ENCODE measurements at regions of chr6 and their contacts with region 1.

Region 1: GRCh38 chr6:722077-722524 is 29.2 kb upstream of the EXOC2 start:
- DNase-seq: peak in 1 of 2 experiments; percentile 75
- H3K4me3 ChIP-seq: no peak overlapping the region
- H3K27ac ChIP-seq: no peak overlapping the region
- H3K4me1 ChIP-seq: no peaks in the 10 kb centered on the region
- H3K27me3 ChIP-seq: no peaks in the 10 kb centered on the region
- CTCF ChIP-seq: peak; percentile 75 to 85 (median 82)
- EP300 ChIP-seq: no peak
- POLR2A ChIP-seq: no peak
- RAD21 ChIP-seq: peak; percentile 68 to 73

Region 2: DNA sequence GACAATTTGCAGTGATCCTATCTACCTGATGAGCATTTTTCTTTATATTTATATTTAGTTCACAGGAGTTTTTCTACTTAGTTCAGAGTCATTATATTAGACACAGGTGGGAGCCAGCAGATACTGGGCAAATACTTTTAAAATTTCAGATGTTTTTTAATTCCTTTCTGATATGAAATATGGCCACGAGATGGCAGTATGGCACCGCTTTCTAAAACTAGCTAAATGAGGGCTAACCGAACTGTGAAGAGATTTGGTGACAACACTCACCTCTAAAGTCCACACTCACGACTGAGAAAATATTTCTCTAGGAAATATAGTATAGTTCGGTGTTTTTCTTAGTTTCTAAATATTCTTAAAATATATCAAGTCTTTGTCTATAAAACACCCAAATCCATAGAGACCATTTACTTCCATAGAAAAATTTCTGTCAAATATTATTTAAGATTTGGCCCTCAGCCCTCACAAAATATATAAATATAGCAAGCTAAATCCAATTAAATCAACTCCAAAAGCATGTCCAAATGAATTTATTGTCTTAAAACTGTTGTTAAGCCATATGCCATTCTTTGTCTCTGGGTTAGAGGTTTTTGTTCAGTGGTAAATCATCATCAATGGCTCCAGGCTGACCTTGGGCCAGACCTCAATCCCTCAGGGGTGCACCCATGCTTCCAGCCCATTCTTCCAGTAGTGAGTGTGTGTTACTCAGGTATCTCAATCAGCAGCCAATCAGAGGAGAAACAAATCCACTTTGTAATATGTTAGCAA is 128.8 kb before region 1 on chr6:
- CTCF ChIA-PET with region 1: interaction called, 37 read pairs
- POLR2A ChIA-PET with region 1: no interaction called
- DNase-seq: no peak
- H3K4me3 ChIP-seq: no peak overlapping the region
- H3K27ac ChIP-seq: 0 out of 2 replicates have a peak overlapping the region, but pooled peaks have one; percentile 25
- H3K4me1 ChIP-seq: peaks cover 0 to 6% (median 3%) of the 10 kb centered on the region in 4 experiments; a peak in 6 of 7 replicates
- H3K27me3 ChIP-seq: no peaks in the 10 kb centered on the region
- CTCF ChIP-seq: peak in 2 of 3 experiments; percentile 39 to 55; a peak in 3 of 4 replicates
- EP300 ChIP-seq: no peak
- POLR2A ChIP-seq: no peak
- RAD21 ChIP-seq: peak; percentile 76 to 78

Region 3: DNA sequence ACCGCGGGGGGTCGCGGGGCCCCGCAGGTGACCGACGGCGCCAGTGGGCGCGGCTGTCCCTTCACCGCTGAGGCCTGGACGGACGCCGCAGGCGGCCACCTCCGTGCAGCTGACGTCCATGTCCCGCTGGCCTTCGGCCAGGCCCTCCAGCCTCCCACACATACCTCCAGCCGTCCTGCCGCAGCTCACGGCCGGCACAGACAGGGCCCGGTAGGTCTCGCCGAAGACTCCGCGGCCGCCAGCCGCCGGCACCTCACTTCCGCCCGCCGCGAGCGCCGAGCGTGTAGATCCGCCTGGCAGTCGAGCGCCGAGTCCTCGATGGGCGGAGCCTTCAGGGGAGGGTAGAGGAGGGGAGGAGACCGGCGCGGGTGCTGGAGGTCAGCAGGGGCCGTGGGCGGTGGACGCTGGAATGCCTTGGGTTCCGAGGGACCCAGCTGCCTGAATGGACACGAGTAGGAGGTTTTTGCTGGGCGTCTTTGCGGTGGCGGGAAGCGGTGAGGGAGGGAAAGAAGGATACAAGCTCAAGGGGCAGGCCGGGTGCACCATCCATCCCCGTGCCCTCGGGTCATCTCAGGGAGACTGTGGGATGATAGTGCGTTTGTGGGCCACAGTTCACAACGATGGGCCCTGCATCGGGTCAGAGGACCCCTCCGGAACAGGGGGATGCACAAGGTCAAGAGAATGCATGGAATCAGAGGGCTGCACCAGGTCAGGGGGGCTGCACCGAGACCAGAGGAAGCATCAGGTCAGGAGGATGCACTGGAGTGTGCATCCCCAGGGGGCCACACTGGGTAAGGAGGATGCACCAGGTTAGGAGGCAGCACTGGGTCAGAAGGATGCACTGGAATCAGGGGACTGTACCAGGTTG is 29.0 kb before region 1 on chr6 and contains the start of gene EXOC2:
- CTCF ChIA-PET with region 1: interaction called, 11 read pairs
- POLR2A ChIA-PET with region 1: no interaction called
- DNase-seq: peak; percentile 54 to 92
- H3K4me3 ChIP-seq: peak within 1 kb of the TSS; percentile 71 to 93 (median 88)
- H3K27ac ChIP-seq: peak within 1 kb of the TSS; percentile 56; the same call in 1 of the 2 replicates
- H3K4me1 ChIP-seq: peaks cover 0 to 4% (median 1%) of the 10 kb centered on the region in 4 experiments; a peak in 4 of 7 replicates
- H3K27me3 ChIP-seq: no peaks in the 10 kb centered on the region
- CTCF ChIP-seq: peak; percentile 84 to 99 (median 85)
- EP300 ChIP-seq: peak in 1 of 2 experiments; percentile 91; a peak in 1 of 3 replicates
- POLR2A ChIP-seq: peak in 1 of 2 experiments; percentile 40; a peak in 1 of 3 replicates
- RAD21 ChIP-seq: peak; percentile 49 to 63
- total RNA-seq, gene EXOC2: 44.2 and 44.4 TPM in 2 replicates

Region 4: GRCh38 chr6:701700-702479 is 20.2 kb before region 1 on chr6:
- CTCF ChIA-PET with region 1: interaction called, 20 read pairs
- POLR2A ChIA-PET with region 1: interaction called, 5 read pairs
- DNase-seq: no peak
- H3K4me3 ChIP-seq: peak overlapping the region in 1 of 4 experiments; percentile 11; a peak in 1 of 8 replicates
- H3K27ac ChIP-seq: no peak overlapping the region
- H3K4me1 ChIP-seq: peaks cover 4 to 17% (median 13%) of the 10 kb centered on the region in 4 experiments
- H3K27me3 ChIP-seq: no peaks in the 10 kb centered on the region
- CTCF ChIP-seq: peak; percentile 34 to 51 (median 49)
- EP300 ChIP-seq: no peak
- POLR2A ChIP-seq: no peak
- RAD21 ChIP-seq: 0 out of 4 replicates have a peak, but pooled peaks of 1 of the 2 experiments have one; percentile 31

Region 5: GRCh38 chr6:710601-711571 is 11.2 kb before region 1 on chr6:
- CTCF ChIA-PET with region 1: interaction called, 11 read pairs
- POLR2A ChIA-PET with region 1: interaction called, 5 read pairs
- DNase-seq: peak in 1 of 2 experiments; percentile 75
- H3K4me3 ChIP-seq: peak overlapping the region; percentile 38 to 63 (median 48)
- H3K27ac ChIP-seq: no peak overlapping the region
- H3K4me1 ChIP-seq: peaks cover 4 to 17% (median 7%) of the 10 kb centered on the region in 4 experiments; a peak in 6 of 7 replicates
- H3K27me3 ChIP-seq: peaks cover 0 to 2% (median 0%) of the 10 kb centered on the region in 4 experiments; a peak in 3 of 7 replicates
- CTCF ChIP-seq: no peak
- EP300 ChIP-seq: no peak
- POLR2A ChIP-seq: peak in 1 of 2 experiments; percentile 41; a peak in 2 of 3 replicates
- RAD21 ChIP-seq: no peak

Region 6: DNA sequence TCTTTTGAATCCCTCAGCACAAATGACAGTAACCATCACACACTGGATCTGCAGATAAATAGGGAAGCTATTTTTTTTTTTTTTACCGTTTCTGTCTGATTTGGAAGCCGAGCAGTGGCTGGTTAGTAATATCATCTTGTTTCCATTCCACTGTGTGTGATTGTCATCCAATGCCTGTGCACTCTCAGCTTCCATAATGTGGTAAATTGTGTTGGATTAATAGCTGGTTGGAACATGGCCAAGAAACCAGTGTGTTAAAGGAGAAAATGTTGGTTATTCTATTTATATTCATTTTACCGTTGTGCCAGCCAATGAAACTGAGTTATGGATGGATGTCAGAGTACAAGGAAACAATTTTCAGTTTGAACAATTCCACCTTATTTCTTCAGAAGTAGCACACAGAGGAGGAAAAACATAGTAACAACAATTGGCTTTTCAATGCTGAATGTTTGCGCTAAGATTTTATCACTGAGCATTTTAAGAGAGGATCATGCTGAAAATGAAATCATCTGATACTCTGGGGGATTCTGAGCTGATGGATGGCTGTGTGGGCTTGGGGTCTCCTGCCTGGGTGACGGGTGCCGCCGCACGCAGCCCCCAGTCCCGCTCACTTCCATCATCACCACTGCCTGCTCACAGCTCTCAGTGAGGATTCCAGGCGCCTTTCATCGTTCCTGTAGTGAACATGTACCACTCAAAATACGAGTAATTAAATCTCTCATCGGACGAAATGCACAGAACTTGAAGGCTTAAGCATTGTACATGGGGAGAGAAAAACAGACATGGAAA is 11.5 kb after region 1 on chr6:
- CTCF ChIA-PET with region 1: interaction called, 48 read pairs
- POLR2A ChIA-PET with region 1: no interaction called
- DNase-seq: no peak
- H3K4me3 ChIP-seq: no peak overlapping the region
- H3K27ac ChIP-seq: no peak overlapping the region
- H3K4me1 ChIP-seq: peaks cover 0 to 5% (median 1%) of the 10 kb centered on the region in 4 experiments; a peak in 4 of 7 replicates
- H3K27me3 ChIP-seq: no peaks in the 10 kb centered on the region
- CTCF ChIP-seq: no peak
- EP300 ChIP-seq: no peak
- POLR2A ChIP-seq: no peak
- RAD21 ChIP-seq: no peak

Region 7: DNA sequence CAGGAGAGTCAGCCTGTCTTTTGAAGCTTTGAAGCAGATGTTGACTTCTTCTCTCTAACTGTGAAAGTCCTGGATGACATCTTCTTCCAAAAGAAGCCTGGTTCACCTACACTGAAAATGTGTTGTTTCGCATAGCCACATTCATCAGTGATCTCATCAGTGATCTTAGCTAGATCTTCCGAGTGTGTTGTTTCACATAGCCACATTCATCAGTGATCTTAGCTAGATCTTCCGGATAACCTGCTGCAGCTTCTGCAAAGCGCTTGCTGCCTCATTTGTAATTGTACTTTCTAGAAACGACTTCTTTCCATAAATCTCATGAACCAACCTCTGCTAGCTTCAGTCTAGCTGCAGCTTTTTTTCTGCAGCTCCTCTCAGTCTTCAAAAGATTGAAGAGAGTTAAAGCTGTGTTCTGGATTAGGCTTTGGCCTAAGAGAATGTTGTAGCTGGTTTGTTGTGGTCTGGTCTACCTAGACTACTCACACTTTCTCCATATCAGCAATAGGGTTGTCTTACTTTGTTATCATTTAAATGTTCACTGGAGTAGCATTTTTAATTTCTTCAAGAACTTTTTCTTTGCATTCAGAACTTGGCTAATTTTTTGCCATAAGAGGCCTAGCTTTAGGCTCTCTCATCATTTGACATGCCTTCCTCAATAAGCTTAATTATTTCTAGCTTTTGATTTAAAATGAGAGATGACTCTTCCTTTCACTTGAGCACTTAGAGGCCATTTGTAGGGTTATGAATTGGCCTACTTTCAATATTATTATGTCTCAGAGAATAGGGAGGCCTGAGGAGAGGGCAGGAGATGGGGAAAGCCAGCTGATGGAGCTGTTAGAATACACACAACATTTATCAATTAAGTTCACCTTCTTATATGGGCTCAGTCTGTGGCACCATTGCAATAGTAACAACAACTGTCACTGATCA is 19.6 kb after region 1 on chr6:
- CTCF ChIA-PET with region 1: interaction called, 14 read pairs
- POLR2A ChIA-PET with region 1: no interaction called
- DNase-seq: no peak
- H3K4me3 ChIP-seq: no peak overlapping the region
- H3K27ac ChIP-seq: no peak overlapping the region
- H3K4me1 ChIP-seq: no peaks in the 10 kb centered on the region
- H3K27me3 ChIP-seq: no peaks in the 10 kb centered on the region
- CTCF ChIP-seq: no peak
- EP300 ChIP-seq: no peak
- POLR2A ChIP-seq: no peak
- RAD21 ChIP-seq: no peak